CD4-positive, alpha-beta T cell (primary cell): ENCODE measurements at regions of chr5 and their contacts with region 1.

Region 1: GRCh38 chr5:178859625-178860531 is at the start of gene ZNF354B:
- DNase-seq: peak; percentile 65 to 94 (median 78)
- ATAC-seq: peak; percentile 98
- H3K4me3 ChIP-seq: peak within 1 kb of the TSS; percentile 60
- H3K4me3 Mint-ChIP-seq: peak within 1 kb of the TSS; percentile 84
- H3K27ac ChIP-seq: peak within 1 kb of the TSS; percentile 1 to 46
- H3K27ac Mint-ChIP-seq: peak within 1 kb of the TSS; percentile 82
- H3K4me1 ChIP-seq: peaks cover 16% of the 10 kb centered on the region
- H3K4me1 Mint-ChIP-seq: peaks cover 36% of the 10 kb centered on the region
- H3K27me3 ChIP-seq: peaks cover 0 to under 1% of the 10 kb centered on the region in 2 experiments
- H3K27me3 Mint-ChIP-seq: no peaks in the 10 kb centered on the region
- CTCF ChIP-seq: no peak
- total RNA-seq, gene ZNF354B: 6.2 to 6.3 TPM

Region 2: GRCh38 chr5:178883815-178884430 is 24.0 kb after region 1 on chr5:
- CTCF ChIA-PET with region 1: no interaction called
- POLR2A ChIA-PET with region 1: no interaction called
- intact Hi-C with region 1: no loop called
- DNase-seq: no peak
- ATAC-seq: no peak
- H3K4me3 ChIP-seq: no peak overlapping the region
- H3K4me3 Mint-ChIP-seq: no peak overlapping the region
- H3K27ac ChIP-seq: no peak overlapping the region
- H3K27ac Mint-ChIP-seq: no peak overlapping the region
- H3K4me1 ChIP-seq: no peaks in the 10 kb centered on the region
- H3K4me1 Mint-ChIP-seq: no peaks in the 10 kb centered on the region
- H3K27me3 ChIP-seq: no peaks in the 10 kb centered on the region
- H3K27me3 Mint-ChIP-seq: no peaks in the 10 kb centered on the region
- CTCF ChIP-seq: no peak

Region 3: GRCh38 chr5:178895651-178896571 is 36.0 kb after region 1 on chr5 and contains the start of gene ZFP2:
- CTCF ChIA-PET with region 1: no interaction called
- POLR2A ChIA-PET with region 1: interaction called, 4 read pairs
- intact Hi-C with region 1: loop called in 1 of 2 experiments (anchors 5 kb)
- DNase-seq: peak in 11 of 14 experiments; percentile 2 to 60 (median 21)
- ATAC-seq: peak; percentile 73
- H3K4me3 ChIP-seq: peak within 1 kb of the TSS; percentile 61
- H3K4me3 Mint-ChIP-seq: peak within 1 kb of the TSS; percentile 90
- H3K27ac ChIP-seq: no peak within 1 kb of the TSS
- H3K27ac Mint-ChIP-seq: no peak within 1 kb of the TSS
- H3K4me1 ChIP-seq: peaks cover 9% of the 10 kb centered on the region
- H3K4me1 Mint-ChIP-seq: peaks cover 7% of the 10 kb centered on the region
- H3K27me3 ChIP-seq: no peaks in the 10 kb centered on the region
- H3K27me3 Mint-ChIP-seq: no peaks in the 10 kb centered on the region
- CTCF ChIP-seq: no peak
- total RNA-seq, gene ZFP2: 0.36 to 0.49 TPM

Region 4: DNA sequence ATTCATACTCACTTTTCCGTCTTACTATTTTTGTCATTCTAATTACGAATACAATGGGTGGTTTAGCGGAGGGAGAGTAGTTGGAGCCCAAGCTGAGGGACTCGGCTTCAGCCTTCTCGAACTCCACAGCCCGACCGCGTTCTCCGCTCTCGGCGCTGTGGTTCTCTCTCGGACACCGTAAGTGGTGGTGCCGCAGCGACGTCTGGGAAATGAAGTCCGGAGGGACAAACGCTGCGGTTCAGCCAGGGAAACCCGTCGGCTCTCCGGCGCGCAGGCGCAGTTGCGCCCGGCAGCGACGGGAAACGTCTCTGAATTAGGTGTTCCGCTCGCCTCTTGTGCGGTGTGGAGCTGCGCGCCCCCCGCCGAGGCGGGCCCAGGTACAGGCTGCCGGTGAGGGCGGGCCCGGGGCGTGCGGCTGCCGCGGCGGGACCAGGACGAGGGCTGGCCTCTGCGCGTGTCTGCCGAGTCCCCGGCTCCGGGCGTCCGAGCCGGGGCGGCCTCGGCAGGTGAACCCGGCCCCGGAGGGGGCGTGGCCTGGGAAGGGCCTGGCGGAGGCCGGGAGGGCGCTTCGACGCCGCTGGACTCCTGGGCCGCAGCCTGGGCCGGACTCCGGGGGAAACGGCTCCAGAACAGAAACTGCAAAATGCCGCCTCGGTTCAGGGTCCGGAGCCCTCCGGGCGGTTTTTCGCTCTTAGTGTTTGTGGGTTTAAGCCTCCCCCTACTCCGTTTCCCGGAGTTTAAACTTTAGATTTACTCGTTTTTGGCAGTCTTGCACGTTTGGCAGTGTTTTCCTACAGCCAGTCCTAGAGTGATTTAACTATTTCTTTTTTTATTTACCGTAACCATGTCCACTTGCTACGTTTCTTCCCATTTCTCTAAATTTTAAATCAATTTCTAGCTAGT is 163.9 kb after region 1 on chr5 and contains the start of gene ZNF879:
- CTCF ChIA-PET with region 1: no interaction called
- POLR2A ChIA-PET with region 1: interaction called, 8 read pairs
- intact Hi-C with region 1: loop called in 1 of 2 experiments (anchors 2 kb)
- DNase-seq: peak; percentile 90 to 97 (median 94)
- ATAC-seq: peak; percentile 94
- H3K4me3 ChIP-seq: peak within 1 kb of the TSS; percentile 64
- H3K4me3 Mint-ChIP-seq: peak within 1 kb of the TSS; percentile 95
- H3K27ac ChIP-seq: no peak within 1 kb of the TSS
- H3K27ac Mint-ChIP-seq: peak within 1 kb of the TSS; percentile 83
- H3K4me1 ChIP-seq: peaks cover 22% of the 10 kb centered on the region
- H3K4me1 Mint-ChIP-seq: peaks cover 16% of the 10 kb centered on the region
- H3K27me3 ChIP-seq: no peaks in the 10 kb centered on the region
- H3K27me3 Mint-ChIP-seq: peaks cover 4% of the 10 kb centered on the region
- CTCF ChIP-seq: no peak
- total RNA-seq, gene ZNF879: 4.9 to 5.1 TPM

Region 5: DNA sequence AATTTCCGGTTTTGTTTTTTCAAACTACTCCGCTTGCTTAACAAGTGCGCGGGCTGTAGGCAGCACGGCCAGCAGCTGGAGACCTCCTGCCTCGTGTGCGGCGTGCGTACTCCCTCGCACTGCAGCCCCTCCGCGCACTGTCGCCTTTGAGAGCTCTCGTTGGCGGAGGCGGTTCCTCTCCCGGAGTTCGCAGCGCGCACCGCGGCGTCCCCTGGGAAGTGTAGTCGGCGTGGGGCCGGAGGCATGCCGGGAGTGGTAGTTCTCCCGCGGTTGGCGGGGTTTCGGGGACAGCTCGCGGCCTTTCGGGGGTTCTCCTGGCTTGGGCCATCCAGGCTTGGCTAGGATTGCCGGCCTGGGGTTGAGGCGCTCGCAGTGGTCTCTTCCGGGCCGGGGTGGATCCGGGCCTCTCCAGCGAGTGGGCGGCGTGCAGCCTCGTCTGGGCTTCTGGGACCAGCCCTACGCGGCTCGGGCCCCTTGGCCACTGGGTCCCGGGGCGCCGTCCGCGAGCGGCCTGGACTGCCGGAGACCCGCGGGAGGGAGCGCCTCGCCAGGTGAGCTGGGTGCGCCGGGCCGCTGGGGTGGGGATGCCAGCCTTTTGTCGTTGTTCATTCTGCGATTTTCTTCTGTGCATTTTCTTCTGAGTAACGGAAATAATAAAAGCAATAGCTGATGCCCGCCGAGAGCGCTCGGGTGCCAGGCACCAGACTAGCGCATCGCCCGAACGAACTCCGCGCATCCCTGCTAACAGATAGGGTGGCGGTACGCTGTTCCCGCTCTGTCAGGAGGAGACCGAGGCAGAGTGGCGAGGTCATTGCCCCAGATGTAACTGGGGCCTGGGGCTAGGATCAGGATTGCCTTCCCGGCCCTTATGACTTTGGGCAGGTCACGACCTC is 200.5 kb after region 1 on chr5 and contains the start of gene ZNF354C:
- CTCF ChIA-PET with region 1: interaction called, 3 read pairs
- POLR2A ChIA-PET with region 1: interaction called, 43 read pairs
- intact Hi-C with region 1: loop called (anchors 1 kb)
- DNase-seq: peak; percentile 73 to 91 (median 82)
- ATAC-seq: peak; percentile 97
- H3K4me3 ChIP-seq: peak within 1 kb of the TSS; percentile 75
- H3K4me3 Mint-ChIP-seq: peak within 1 kb of the TSS; percentile 96
- H3K27ac ChIP-seq: peak within 1 kb of the TSS; percentile 47 to 61
- H3K27ac Mint-ChIP-seq: peak within 1 kb of the TSS; percentile 95
- H3K4me1 ChIP-seq: peaks cover 15% of the 10 kb centered on the region
- H3K4me1 Mint-ChIP-seq: peaks cover 34% of the 10 kb centered on the region
- H3K27me3 ChIP-seq: no peaks in the 10 kb centered on the region
- H3K27me3 Mint-ChIP-seq: peaks cover 9% of the 10 kb centered on the region
- CTCF ChIP-seq: no peak
- total RNA-seq, gene ZNF354C: 2.5 to 2.9 TPM

Region 6: GRCh38 chr5:179613460-179614071 is 753.7 kb after region 1 on chr5:
- CTCF ChIA-PET with region 1: no interaction called
- POLR2A ChIA-PET with region 1: no interaction called
- intact Hi-C with region 1: loop called in 1 of 2 experiments (anchors 10 kb)
- DNase-seq: peak in 1 of 14 experiments; percentile 40
- ATAC-seq: peak; percentile 36
- H3K4me3 ChIP-seq: no peak overlapping the region
- H3K4me3 Mint-ChIP-seq: peak overlapping the region; percentile 34
- H3K27ac ChIP-seq: no peak overlapping the region
- H3K27ac Mint-ChIP-seq: peak overlapping the region; percentile 72
- H3K4me1 ChIP-seq: peaks cover 53% of the 10 kb centered on the region
- H3K4me1 Mint-ChIP-seq: peaks cover 84% of the 10 kb centered on the region
- H3K27me3 ChIP-seq: no peaks in the 10 kb centered on the region
- H3K27me3 Mint-ChIP-seq: no peaks in the 10 kb centered on the region
- CTCF ChIP-seq: no peak